ENCODE measurements at regions of chr1 and their contacts with region 1.

Region 1: GRCh38 chr1:62175568-62176179 is 19.0 kb upstream of the L1TD1 start:
- DNase-seq: peak in 1 of 2 experiments; percentile 71
- H3K4me3 ChIP-seq: 0 out of 8 replicates have a peak overlapping the region, but pooled peaks of 1 of the 4 experiments have one; percentile 3
- H3K27ac ChIP-seq: no peak overlapping the region
- H3K4me1 ChIP-seq: peaks cover 7 to 22% (median 17%) of the 10 kb centered on the region in 4 experiments
- H3K27me3 ChIP-seq: no peaks in the 10 kb centered on the region
- CTCF ChIP-seq: peak in 2 of 3 experiments; percentile 58 to 73; a peak in 2 of 4 replicates
- EP300 ChIP-seq: no peak
- POLR2A ChIP-seq: no peak
- RAD21 ChIP-seq: peak; percentile 90 to 91

Region 2: GRCh38 chr1:62025154-62025553 is 150.5 kb before region 1 on chr1:
- CTCF ChIA-PET with region 1: no interaction called
- POLR2A ChIA-PET with region 1: no interaction called
- DNase-seq: no peak
- H3K4me3 ChIP-seq: no peak overlapping the region
- H3K27ac ChIP-seq: no peak overlapping the region
- H3K4me1 ChIP-seq: peaks cover 0 to 4% (median 0%) of the 10 kb centered on the region in 4 experiments; a peak in 1 of 7 replicates
- H3K27me3 ChIP-seq: no peaks in the 10 kb centered on the region
- CTCF ChIP-seq: no peak
- EP300 ChIP-seq: no peak
- POLR2A ChIP-seq: no peak
- RAD21 ChIP-seq: no peak

Region 3: DNA sequence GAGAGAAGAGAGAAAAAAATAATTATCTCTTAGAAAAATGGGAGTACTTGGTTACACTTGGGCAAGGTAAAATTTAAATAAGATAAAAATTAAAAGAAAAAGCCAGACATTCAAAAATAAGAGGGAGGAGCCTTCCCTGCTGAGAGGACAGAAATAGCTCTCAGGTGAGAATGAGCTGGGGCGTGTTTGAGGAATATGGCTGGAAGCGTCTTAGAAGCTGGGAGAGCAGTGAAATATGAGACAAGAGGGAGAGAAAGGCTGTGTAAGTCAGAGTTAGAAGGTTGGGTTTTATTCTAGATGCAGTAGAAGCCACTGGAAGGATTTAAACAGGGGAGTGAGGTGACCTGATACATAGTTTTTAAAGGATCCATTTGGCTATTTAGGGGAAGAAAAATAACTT is 135.2 kb before region 1 on chr1:
- CTCF ChIA-PET with region 1: no interaction called
- POLR2A ChIA-PET with region 1: no interaction called
- DNase-seq: no peak
- H3K4me3 ChIP-seq: no peak overlapping the region
- H3K27ac ChIP-seq: no peak overlapping the region
- H3K4me1 ChIP-seq: peaks cover 0 to 8% (median 3%) of the 10 kb centered on the region in 4 experiments; a peak in 3 of 7 replicates
- H3K27me3 ChIP-seq: no peaks in the 10 kb centered on the region
- CTCF ChIP-seq: no peak
- EP300 ChIP-seq: no peak
- POLR2A ChIP-seq: no peak
- RAD21 ChIP-seq: no peak

Region 4: GRCh38 chr1:62064829-62065407 is 110.8 kb before region 1 on chr1:
- CTCF ChIA-PET with region 1: no interaction called
- POLR2A ChIA-PET with region 1: no interaction called
- DNase-seq: no peak
- H3K4me3 ChIP-seq: no peak overlapping the region
- H3K27ac ChIP-seq: no peak overlapping the region
- H3K4me1 ChIP-seq: 0 out of 7 replicates have a peak, but pooled peaks cover 0 to 2% (median 0%) of the 10 kb centered on the region in 4 experiments
- H3K27me3 ChIP-seq: no peaks in the 10 kb centered on the region
- CTCF ChIP-seq: no peak
- EP300 ChIP-seq: no peak
- POLR2A ChIP-seq: no peak
- RAD21 ChIP-seq: no peak

Region 5: DNA sequence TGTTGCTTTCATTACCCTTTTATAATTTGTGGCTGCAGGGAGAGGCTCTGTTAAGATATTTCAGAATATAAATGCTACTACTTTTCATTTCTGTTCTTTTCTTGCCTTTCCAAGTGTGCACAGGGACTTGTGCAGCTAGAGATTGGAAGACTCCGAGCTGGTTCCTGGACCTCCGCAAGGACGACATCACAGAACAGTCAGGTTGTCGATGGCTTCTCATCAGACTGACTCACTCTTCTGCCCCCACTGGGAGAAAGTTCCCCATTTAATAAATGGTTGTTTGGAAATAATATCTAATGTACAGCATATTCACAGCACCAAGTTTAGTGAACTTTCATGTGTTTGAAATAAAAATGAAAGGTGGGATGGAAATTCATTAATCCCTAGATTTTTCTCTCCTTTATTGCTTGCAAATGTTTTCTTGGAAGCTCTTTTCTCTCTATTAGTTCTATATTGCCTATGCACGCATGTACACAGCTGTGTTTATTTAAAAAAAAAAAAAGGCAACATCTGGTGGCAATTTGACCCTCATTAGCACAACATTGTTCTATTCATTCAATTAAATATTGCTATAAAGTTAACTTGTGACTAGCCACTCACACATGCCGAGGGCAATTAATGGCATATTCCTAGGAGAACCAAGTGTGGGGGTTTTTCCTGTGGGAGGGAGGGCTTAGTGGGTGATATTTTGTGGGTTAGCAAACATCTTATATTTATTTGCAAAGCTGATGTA is 58.5 kb before region 1 on chr1:
- CTCF ChIA-PET with region 1: no interaction called
- POLR2A ChIA-PET with region 1: no interaction called
- DNase-seq: no peak
- H3K4me3 ChIP-seq: no peak overlapping the region
- H3K27ac ChIP-seq: no peak overlapping the region
- H3K4me1 ChIP-seq: no peaks in the 10 kb centered on the region
- H3K27me3 ChIP-seq: no peaks in the 10 kb centered on the region
- CTCF ChIP-seq: no peak
- EP300 ChIP-seq: no peak
- POLR2A ChIP-seq: no peak
- RAD21 ChIP-seq: no peak

Region 6: DNA sequence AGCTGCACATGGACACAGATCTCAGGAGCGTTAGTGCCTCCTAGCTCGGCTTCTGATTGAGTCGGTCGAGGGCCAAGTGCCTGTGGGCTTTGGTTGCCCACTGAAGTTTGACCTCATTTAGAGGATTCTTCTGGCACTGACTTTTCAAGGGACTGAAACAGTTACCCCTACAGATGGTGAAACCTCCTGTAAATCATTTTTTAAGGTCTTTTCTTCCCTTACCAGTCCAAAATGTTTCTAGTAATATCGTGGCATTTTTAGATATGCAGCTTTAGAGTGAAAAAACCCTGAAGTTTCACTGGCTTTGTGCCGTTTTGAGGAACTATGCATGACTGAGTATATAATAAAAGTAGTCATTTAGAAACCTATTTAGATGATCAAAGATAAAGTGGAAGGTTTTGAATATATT is 15.7 kb before region 1 on chr1:
- CTCF ChIA-PET with region 1: interaction called, 13 read pairs
- POLR2A ChIA-PET with region 1: interaction called, 4 read pairs
- DNase-seq: no peak
- H3K4me3 ChIP-seq: no peak overlapping the region
- H3K27ac ChIP-seq: no peak overlapping the region
- H3K4me1 ChIP-seq: no peaks in the 10 kb centered on the region
- H3K27me3 ChIP-seq: no peaks in the 10 kb centered on the region
- CTCF ChIP-seq: no peak
- EP300 ChIP-seq: no peak
- POLR2A ChIP-seq: no peak
- RAD21 ChIP-seq: no peak

Region 7: DNA sequence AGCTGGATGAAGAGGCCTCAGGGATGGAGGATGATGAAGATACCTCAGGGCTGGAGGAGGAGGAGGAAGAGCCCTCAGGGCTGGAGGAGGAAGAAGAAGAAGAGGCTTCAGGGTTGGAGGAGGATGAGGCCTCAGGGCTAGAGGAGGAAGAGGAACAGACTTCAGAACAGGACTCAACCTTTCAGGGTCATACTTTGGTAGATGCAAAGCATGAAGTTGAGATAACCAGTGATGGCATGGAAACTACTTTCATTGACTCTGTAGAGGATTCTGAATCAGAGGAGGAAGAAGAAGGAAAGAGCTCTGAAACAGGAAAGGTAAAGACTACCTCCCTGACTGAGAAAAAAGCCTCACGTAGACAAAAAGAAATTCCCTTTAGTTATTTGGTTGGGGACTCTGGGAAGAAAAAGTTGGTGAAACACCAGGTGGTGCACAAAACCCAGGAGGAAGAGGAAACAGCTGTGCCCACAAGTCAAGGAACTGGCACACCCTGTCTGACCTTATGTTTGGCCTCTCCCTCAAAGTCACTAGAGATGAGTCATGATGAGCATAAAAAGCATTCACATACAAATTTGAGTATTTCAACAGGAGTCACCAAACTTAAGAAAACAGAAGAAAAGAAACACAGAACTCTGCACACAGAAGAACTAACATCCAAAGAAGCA is 34.4 kb after region 1 on chr1:
- CTCF ChIA-PET with region 1: interaction called, 69 read pairs
- POLR2A ChIA-PET with region 1: interaction called, 1,232 read pairs
- DNase-seq: no peak
- H3K4me3 ChIP-seq: no peak overlapping the region
- H3K27ac ChIP-seq: no peak overlapping the region
- H3K4me1 ChIP-seq: no peaks in the 10 kb centered on the region; a peak in 1 of 7 replicates
- H3K27me3 ChIP-seq: no peaks in the 10 kb centered on the region
- CTCF ChIP-seq: no peak
- EP300 ChIP-seq: no peak
- POLR2A ChIP-seq: peak; percentile 21 to 38
- RAD21 ChIP-seq: no peak

Region 8: DNA sequence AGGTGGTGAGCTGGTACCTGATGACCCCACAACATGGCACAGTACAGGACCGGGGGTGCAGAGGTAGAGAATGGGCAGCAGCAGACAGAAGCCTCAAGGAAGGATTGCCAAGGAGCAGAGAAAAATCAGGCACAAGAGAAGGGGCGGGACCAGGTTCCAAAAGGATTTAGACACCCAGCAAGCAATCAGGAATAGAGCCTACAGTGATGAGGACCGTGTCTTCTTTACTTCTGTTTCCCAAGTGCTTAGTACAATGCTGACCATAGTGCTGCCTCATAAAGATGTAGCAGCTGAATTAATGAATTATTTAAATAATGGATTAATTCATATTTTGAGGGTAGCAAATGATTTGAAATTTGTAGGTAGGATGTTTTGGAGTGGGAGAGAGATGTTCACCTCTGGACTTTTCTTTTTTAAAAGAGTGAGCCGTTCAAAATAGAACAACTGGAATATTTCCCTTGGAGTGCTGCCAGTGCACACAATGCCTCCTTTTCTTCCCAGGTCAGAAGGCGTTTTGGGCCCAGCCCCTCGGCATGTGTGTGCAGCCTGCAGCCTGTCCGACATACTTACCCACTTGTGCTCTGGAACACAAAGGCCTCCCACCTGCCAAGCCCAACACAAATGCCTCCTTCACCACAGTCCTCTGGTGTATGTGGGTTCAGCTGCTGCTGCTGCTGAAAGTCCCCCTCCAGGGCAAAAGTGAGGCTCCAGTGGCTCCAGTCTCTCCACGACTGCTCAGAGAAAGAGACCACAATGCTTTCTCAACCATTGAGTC is 123.9 kb after region 1 on chr1:
- CTCF ChIA-PET with region 1: interaction called, 13 read pairs
- POLR2A ChIA-PET with region 1: no interaction called
- DNase-seq: no peak
- H3K4me3 ChIP-seq: no peak overlapping the region
- H3K27ac ChIP-seq: no peak overlapping the region
- H3K4me1 ChIP-seq: peaks cover 4 to 15% (median 8%) of the 10 kb centered on the region in 4 experiments; a peak in 5 of 7 replicates
- H3K27me3 ChIP-seq: peaks cover 0 to 5% (median under 1%) of the 10 kb centered on the region in 4 experiments; a peak in 4 of 7 replicates
- CTCF ChIP-seq: no peak
- EP300 ChIP-seq: no peak
- POLR2A ChIP-seq: no peak
- RAD21 ChIP-seq: no peak

Region 9: GRCh38 chr1:62391369-62391971 is 215.8 kb after region 1 on chr1:
- CTCF ChIA-PET with region 1: interaction called, 11 read pairs
- POLR2A ChIA-PET with region 1: no interaction called
- DNase-seq: peak; percentile 23 to 82
- H3K4me3 ChIP-seq: no peak overlapping the region
- H3K27ac ChIP-seq: no peak overlapping the region
- H3K4me1 ChIP-seq: no peaks in the 10 kb centered on the region; a peak in 1 of 7 replicates
- H3K27me3 ChIP-seq: no peaks in the 10 kb centered on the region
- CTCF ChIP-seq: peak; percentile 58 to 96 (median 92)
- EP300 ChIP-seq: no peak
- POLR2A ChIP-seq: no peak
- RAD21 ChIP-seq: peak; percentile 67 to 82

Measured in H1 (cell line).